ENCODE measurements at regions of chr1 and their contacts with region 1.

Region 1: DNA sequence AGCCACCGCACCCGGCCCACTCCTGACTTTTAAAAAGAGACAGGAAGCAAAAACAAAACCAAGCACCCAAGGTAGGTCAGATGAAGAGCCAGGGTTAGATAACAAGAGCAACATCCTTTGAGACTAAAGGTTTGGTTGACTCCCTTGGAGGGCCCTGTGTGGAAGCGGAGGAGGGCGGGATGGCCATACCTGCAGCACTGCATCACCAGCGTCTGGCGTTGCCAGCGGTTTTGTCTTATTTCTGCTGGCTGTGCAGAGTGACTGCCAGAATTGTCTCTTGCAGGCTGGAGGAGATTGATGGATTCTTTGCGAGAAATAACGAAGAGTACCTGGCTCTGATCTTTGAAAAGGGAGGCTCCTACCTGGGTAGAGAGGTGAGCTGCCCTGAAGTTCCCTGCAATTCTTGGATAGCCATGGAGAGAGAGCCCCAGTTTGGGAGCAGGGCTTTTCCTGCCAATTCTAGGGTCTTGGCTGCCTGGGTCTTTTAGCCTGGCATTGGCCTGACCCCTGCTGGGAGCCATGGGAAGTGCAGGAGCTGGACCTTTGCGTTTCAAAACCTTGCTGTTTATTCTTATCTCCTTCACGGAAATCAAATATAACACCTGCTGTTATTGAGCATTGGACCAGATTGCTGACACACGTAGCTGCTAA is 24.0 kb downstream of the QSOX1 start:
- DNase-seq: peak; percentile 42 to 82 (median 66)
- ATAC-seq: peak; percentile 87
- H3K4me3 ChIP-seq: no peak overlapping the region
- H3K4me3 Mint-ChIP-seq: no peak overlapping the region
- H3K27ac ChIP-seq: no peak overlapping the region
- H3K27ac Mint-ChIP-seq: no peak overlapping the region
- H3K4me1 ChIP-seq: no peaks in the 10 kb centered on the region
- H3K4me1 Mint-ChIP-seq: no peaks in the 10 kb centered on the region
- H3K27me3 ChIP-seq: no peaks in the 10 kb centered on the region
- H3K27me3 Mint-ChIP-seq: no peaks in the 10 kb centered on the region
- CTCF ChIP-seq: peak; percentile 85

Region 2: DNA sequence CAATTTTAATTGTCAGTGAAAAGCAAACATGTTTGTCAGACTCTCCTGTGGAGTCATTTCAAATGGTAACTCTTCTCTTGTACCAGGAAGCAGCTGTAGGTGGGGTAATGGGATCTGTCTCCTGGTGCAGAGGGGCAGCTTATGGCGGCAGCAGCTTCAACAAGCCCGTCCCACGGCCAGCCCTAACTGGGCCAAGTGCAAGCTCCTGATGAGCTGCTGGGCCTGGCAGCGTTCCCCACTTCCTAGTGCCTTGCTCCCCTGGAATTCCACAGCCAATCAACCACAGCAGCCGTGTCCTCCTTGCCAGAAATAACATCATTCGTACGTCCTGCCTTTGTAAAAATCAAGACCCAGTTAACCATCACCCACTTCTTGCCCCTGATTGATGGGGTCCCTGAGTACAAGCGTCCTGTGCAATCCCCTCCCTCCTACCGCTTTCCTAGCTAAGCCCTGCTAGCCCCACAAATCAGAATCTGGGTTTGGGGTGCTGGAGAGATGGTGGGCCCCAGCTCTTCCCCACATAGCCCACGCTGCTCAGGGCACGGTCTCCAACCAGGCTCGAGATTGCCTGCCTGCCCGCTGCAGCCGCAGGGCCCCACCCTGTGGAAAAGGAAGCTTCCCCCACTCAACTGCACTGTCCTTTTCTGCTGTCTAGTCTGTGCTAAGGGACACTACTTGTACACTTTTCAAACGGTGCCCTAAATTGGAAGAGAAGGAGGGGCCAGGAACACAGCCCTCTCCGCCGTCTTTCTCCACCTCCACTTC is 362.3 kb before region 1 on chr1:
- CTCF ChIA-PET with region 1: interaction called, 3 read pairs
- POLR2A ChIA-PET with region 1: no interaction called
- intact Hi-C with region 1: loop called in 1 of 2 experiments (anchors 5 kb)
- DNase-seq: no peak
- ATAC-seq: no peak
- H3K4me3 ChIP-seq: no peak overlapping the region
- H3K4me3 Mint-ChIP-seq: peak overlapping the region; percentile 92
- H3K27ac ChIP-seq: no peak overlapping the region
- H3K27ac Mint-ChIP-seq: no peak overlapping the region
- H3K4me1 ChIP-seq: peaks cover 12% of the 10 kb centered on the region
- H3K4me1 Mint-ChIP-seq: peaks cover 19% of the 10 kb centered on the region
- H3K27me3 ChIP-seq: no peaks in the 10 kb centered on the region
- H3K27me3 Mint-ChIP-seq: no peaks in the 10 kb centered on the region
- CTCF ChIP-seq: no peak

Region 3: GRCh38 chr1:179882243-179883039 is 296.2 kb before region 1 on chr1 and contains the start of gene TOR1AIP1:
- CTCF ChIA-PET with region 1: no interaction called
- POLR2A ChIA-PET with region 1: no interaction called
- intact Hi-C with region 1: loop called in 1 of 2 experiments (anchors 5 kb)
- DNase-seq: peak; percentile 95 to 99 (median 97)
- ATAC-seq: peak; percentile 74
- H3K4me3 ChIP-seq: peak within 1 kb of the TSS; percentile 91 to 95
- H3K4me3 Mint-ChIP-seq: peak within 1 kb of the TSS; percentile 94
- H3K27ac ChIP-seq: peak within 1 kb of the TSS; percentile 98 to 99
- H3K27ac Mint-ChIP-seq: peak within 1 kb of the TSS; percentile 100
- H3K4me1 ChIP-seq: peaks cover 37% of the 10 kb centered on the region
- H3K4me1 Mint-ChIP-seq: peaks cover 59% of the 10 kb centered on the region
- H3K27me3 ChIP-seq: no peaks in the 10 kb centered on the region
- H3K27me3 Mint-ChIP-seq: no peaks in the 10 kb centered on the region
- CTCF ChIP-seq: peak; percentile 41
- total RNA-seq, gene TOR1AIP1: 108 to 110 TPM

Region 4: GRCh38 chr1:179984942-179985341 is 193.7 kb before region 1 on chr1:
- CTCF ChIA-PET with region 1: no interaction called
- POLR2A ChIA-PET with region 1: no interaction called
- intact Hi-C with region 1: no loop called
- DNase-seq: no peak
- ATAC-seq: no peak
- H3K4me3 ChIP-seq: no peak overlapping the region
- H3K4me3 Mint-ChIP-seq: no peak overlapping the region
- H3K27ac ChIP-seq: no peak overlapping the region
- H3K27ac Mint-ChIP-seq: no peak overlapping the region
- H3K4me1 ChIP-seq: no peaks in the 10 kb centered on the region
- H3K4me1 Mint-ChIP-seq: peaks cover 38% of the 10 kb centered on the region
- H3K27me3 ChIP-seq: no peaks in the 10 kb centered on the region
- H3K27me3 Mint-ChIP-seq: no peaks in the 10 kb centered on the region
- CTCF ChIP-seq: no peak

Region 5: GRCh38 chr1:180101411-180101810 is 77.2 kb before region 1 on chr1:
- CTCF ChIA-PET with region 1: interaction called, 11 read pairs
- POLR2A ChIA-PET with region 1: no interaction called
- intact Hi-C with region 1: loop called in 1 of 2 experiments (anchors 5 kb)
- DNase-seq: no peak
- ATAC-seq: no peak
- H3K4me3 ChIP-seq: no peak overlapping the region
- H3K4me3 Mint-ChIP-seq: no peak overlapping the region
- H3K27ac ChIP-seq: no peak overlapping the region
- H3K27ac Mint-ChIP-seq: no peak overlapping the region
- H3K4me1 ChIP-seq: no peaks in the 10 kb centered on the region
- H3K4me1 Mint-ChIP-seq: peaks cover 6% of the 10 kb centered on the region
- H3K27me3 ChIP-seq: no peaks in the 10 kb centered on the region
- H3K27me3 Mint-ChIP-seq: no peaks in the 10 kb centered on the region
- CTCF ChIP-seq: no peak

Region 6: DNA sequence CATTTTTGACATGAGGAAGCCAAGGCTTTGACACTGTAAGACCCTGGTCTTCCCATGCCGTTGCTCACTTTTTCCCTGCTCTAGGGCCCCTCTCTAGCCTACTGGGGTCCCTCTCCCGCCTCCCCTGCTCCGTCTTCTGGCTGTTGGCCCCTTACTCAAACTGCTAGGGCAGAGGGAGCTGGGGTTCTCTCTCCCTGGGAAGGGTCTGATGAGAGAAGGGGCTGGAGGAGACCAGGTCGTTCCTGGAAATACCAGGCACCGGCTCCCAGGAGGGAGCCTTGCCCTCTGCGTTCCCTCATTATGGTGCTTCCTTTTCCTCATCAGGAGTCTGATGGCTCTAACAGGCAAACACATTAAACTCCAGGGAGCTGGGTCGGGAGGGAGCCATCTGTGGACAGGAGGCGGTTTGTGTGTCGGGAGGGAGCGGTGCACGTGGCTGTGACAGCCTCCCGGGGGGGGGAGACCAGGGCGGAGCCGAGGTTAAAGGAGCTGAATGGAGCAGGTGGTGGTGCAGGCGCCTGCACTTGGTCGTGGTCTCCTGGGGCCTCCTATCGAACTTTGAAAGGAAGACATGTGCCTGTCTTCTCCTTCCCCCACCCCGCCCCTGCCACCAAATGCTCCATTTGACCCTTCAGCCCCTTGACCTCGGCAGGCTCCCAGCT is 16.0 kb after region 1 on chr1:
- CTCF ChIA-PET with region 1: interaction called, 12 read pairs
- POLR2A ChIA-PET with region 1: no interaction called
- intact Hi-C with region 1: no loop called
- DNase-seq: no peak
- ATAC-seq: no peak
- H3K4me3 ChIP-seq: no peak overlapping the region
- H3K4me3 Mint-ChIP-seq: no peak overlapping the region
- H3K27ac ChIP-seq: no peak overlapping the region
- H3K27ac Mint-ChIP-seq: no peak overlapping the region
- H3K4me1 ChIP-seq: peaks cover 13% of the 10 kb centered on the region
- H3K4me1 Mint-ChIP-seq: peaks cover 28% of the 10 kb centered on the region
- H3K27me3 ChIP-seq: no peaks in the 10 kb centered on the region
- H3K27me3 Mint-ChIP-seq: no peaks in the 10 kb centered on the region
- CTCF ChIP-seq: no peak